HCT116 (cell line): ENCODE measurements at regions of chr1 and their contacts with region 1.

Region 1: GRCh38 chr1:232538224-232538942 is 91.5 kb downstream of the SIPA1L2 start:
- DNase-seq: peak; percentile 74
- ATAC-seq: peak; percentile 97
- H3K4me3 ChIP-seq: peak overlapping the region in 1 of 2 experiments; percentile 36; a peak in 2 of 4 replicates
- H3K27ac ChIP-seq: peak overlapping the region; percentile 40; the same call in 1 of the 2 replicates
- H3K4me1 ChIP-seq: peaks cover 20 to 28% of the 10 kb centered on the region in 2 experiments
- H3K27me3 ChIP-seq: no peaks in the 10 kb centered on the region
- CTCF ChIP-seq: no peak
- POLR2A ChIP-seq: no peak
- RAD21 ChIP-seq: peak; percentile 23; the same call in 1 of the 2 replicates

Region 2: GRCh38 chr1:231913493-231913892 is 624.9 kb before region 1 on chr1:
- CTCF ChIA-PET with region 1: no interaction called
- POLR2A ChIA-PET with region 1: no interaction called
- RAD21 ChIA-PET with region 1: no interaction called
- intact Hi-C with region 1: no loop called
- DNase-seq: no peak
- ATAC-seq: no peak
- H3K4me3 ChIP-seq: no peak overlapping the region
- H3K27ac ChIP-seq: no peak overlapping the region
- H3K4me1 ChIP-seq: peaks cover 0 to 6% of the 10 kb centered on the region in 2 experiments; a peak in 1 of 4 replicates
- H3K27me3 ChIP-seq: no peaks in the 10 kb centered on the region
- CTCF ChIP-seq: no peak
- POLR2A ChIP-seq: no peak
- RAD21 ChIP-seq: no peak

Region 3: GRCh38 chr1:232553809-232554208 is 15.4 kb after region 1 on chr1:
- CTCF ChIA-PET with region 1: no interaction called
- POLR2A ChIA-PET with region 1: no interaction called
- RAD21 ChIA-PET with region 1: no interaction called
- intact Hi-C with region 1: no loop called
- DNase-seq: no peak
- ATAC-seq: no peak
- H3K4me3 ChIP-seq: no peak overlapping the region
- H3K27ac ChIP-seq: no peak overlapping the region
- H3K4me1 ChIP-seq: no peaks in the 10 kb centered on the region
- H3K27me3 ChIP-seq: no peaks in the 10 kb centered on the region; the same call in 1 of the 2 replicates
- CTCF ChIP-seq: no peak
- POLR2A ChIP-seq: no peak
- RAD21 ChIP-seq: no peak

Region 4: DNA sequence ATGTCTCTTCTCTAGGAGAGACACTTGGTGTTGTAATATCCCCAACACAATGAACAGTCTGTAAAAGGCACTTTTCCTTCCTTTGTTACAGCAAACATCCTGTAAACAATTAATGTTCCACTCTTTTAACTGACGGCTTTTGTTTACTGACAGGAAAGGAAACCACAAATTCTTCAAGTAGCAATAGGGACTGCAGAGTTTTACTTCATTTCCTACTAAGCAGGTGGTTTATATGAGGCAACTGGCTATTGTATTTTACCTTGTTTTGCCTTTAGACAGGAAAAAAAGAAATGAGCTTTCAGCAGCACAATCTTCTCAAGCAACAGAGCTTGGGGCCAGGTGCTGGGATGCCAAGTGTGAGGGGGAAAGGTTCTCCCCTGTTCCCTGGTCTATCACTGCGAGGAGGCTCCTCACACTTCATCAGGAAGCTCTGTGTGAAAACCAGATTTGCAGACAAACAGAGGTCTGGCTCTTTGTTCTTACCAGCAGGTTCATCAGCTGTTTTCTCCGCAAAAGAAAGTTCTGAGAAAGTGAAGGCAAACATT is 40.3 kb after region 1 on chr1:
- CTCF ChIA-PET with region 1: no interaction called
- POLR2A ChIA-PET with region 1: no interaction called
- RAD21 ChIA-PET with region 1: no interaction called
- intact Hi-C with region 1: no loop called
- DNase-seq: no peak
- ATAC-seq: no peak
- H3K4me3 ChIP-seq: no peak overlapping the region
- H3K27ac ChIP-seq: no peak overlapping the region
- H3K4me1 ChIP-seq: peaks cover 0 to 3% of the 10 kb centered on the region in 2 experiments; a peak in 2 of 4 replicates
- H3K27me3 ChIP-seq: no peaks in the 10 kb centered on the region
- CTCF ChIP-seq: no peak
- POLR2A ChIP-seq: no peak
- RAD21 ChIP-seq: no peak

Region 5: DNA sequence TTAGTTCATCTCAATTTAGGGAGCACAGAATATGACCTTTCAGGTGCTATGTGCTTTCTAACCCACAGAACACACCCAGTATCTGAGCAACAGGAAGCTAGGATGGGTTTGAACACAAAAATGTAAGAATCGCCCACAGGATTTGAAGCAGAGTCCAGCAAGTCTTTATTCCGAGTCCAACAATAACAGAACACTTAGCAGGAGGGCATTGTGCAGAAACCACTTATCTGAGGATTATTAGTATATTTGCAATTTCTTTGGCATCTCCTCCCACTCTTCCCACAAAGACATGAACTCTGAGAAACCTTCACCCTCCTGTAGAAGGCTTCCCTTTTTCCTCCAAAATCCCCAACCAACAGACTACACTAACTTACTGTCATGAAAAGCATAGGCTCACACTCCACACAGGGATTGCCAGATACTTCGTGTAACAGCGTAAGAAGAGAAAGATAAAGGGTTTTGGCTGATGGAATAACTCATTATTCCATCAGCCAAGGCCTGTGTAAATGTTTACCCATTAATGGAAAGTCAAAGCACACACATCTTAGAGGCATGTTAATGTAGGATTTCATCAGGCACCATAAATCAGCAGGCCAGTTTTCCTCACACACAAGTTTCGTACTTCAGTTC is 75.5 kb after region 1 on chr1:
- CTCF ChIA-PET with region 1: no interaction called
- POLR2A ChIA-PET with region 1: no interaction called
- RAD21 ChIA-PET with region 1: no interaction called
- intact Hi-C with region 1: loop called (anchors 5 kb)
- DNase-seq: peak; percentile 66
- ATAC-seq: peak; percentile 77
- H3K4me3 ChIP-seq: no peak overlapping the region
- H3K27ac ChIP-seq: 0 out of 2 replicates have a peak overlapping the region, but pooled peaks have one; percentile 14
- H3K4me1 ChIP-seq: peaks cover 19 to 45% of the 10 kb centered on the region in 2 experiments
- H3K27me3 ChIP-seq: no peaks in the 10 kb centered on the region
- CTCF ChIP-seq: no peak
- POLR2A ChIP-seq: no peak
- RAD21 ChIP-seq: no peak; the same call in 1 of the 2 replicates